ENCODE measurements at regions of chr22 and their contacts with region 1.

Region 1: DNA sequence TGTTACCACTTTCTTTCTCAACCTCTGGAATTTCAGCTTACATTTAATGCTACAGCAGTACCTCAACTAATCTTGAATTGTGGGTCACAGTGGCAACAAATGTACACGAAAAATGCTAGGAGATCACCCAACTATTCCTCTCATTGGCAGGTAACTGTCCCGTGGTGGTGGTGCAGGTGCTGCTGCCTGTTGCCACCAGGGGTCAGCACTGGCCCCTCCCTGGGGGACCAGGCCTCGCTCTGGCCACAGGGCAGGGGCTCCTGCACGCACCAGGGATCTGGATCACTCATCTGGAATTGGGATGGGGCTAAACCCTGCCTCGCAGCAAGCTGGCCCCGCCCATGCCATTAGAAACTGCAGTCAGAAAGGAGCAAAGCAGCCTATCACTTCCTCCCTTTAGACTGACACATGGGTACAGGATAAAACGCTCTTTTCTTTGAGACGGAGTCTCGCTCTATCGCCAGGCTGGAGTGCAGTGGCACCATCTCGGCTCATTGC is 6.9 kb upstream of the POLDIP3 start:
- DNase-seq: peak; percentile 66
- ATAC-seq: peak; percentile 89
- H3K4me3 Mint-ChIP-seq: no peak overlapping the region
- H3K27ac Mint-ChIP-seq: no peak overlapping the region
- H3K4me1 Mint-ChIP-seq: peaks cover 5% of the 10 kb centered on the region
- H3K27me3 Mint-ChIP-seq: no peaks in the 10 kb centered on the region
- CTCF ChIP-seq: peak; percentile 81

Region 2: GRCh38 chr22:42608823-42609361 is 12.7 kb before region 1 on chr22:
- CTCF ChIA-PET with region 1: interaction called, 13 read pairs
- POLR2A ChIA-PET with region 1: interaction called, 64 read pairs
- intact Hi-C with region 1: no loop called
- DNase-seq: no peak
- ATAC-seq: peak; percentile 31
- H3K4me3 Mint-ChIP-seq: no peak overlapping the region
- H3K27ac Mint-ChIP-seq: peak overlapping the region; percentile 69
- H3K4me1 Mint-ChIP-seq: peaks cover 53% of the 10 kb centered on the region
- H3K27me3 Mint-ChIP-seq: no peaks in the 10 kb centered on the region
- CTCF ChIP-seq: no peak

Region 3: DNA sequence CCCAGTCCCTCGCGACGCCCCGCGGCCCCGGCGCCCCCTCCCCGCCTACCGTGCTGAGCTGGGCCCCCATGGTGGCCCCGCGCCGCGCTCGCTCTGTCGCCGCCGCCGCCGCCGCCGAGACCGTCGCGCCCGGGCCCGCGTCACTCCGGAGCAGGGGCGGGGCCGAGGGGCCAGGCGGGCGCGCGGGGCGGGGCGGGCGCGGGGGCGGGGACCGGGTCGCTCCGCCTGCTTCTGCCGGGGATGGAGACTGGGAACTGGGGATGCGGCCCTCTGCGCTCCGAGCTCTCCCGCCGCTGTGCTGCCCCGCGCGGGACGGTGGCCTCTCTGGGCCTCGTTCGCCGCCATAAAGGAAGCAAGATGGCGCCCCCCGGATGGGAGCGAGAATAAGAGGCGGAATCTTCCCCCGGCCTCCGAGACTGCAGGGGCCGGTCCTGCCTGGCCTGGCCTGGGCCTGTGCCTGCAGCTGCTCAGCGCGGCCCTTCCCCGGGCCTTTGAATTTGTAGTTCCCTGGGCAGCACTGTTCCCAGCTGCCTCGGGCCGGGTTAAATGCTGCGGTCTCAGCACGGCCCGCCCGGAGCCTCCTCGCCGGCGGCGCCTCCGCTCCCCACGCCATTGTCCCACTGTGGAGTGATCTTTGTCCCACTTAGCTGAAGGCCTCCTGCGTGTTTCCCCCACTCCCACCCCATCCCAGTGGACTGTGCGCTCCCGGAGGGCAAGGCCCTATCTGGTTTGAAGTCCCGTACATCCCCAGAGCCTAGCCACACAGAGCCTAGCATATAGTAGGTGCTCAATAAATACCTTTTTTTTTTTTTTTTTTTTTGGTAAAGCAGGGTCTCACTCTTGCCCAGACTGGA is 27.9 kb after region 1 on chr22 and contains the start of gene CYB5R3:
- CTCF ChIA-PET with region 1: interaction called, 12 read pairs
- POLR2A ChIA-PET with region 1: interaction called, 64 read pairs
- intact Hi-C with region 1: no loop called
- DNase-seq: peak; percentile 85
- ATAC-seq: peak; percentile 88
- H3K4me3 Mint-ChIP-seq: peak within 1 kb of the TSS; percentile 95
- H3K27ac Mint-ChIP-seq: peak within 1 kb of the TSS; percentile 95
- H3K4me1 Mint-ChIP-seq: peaks cover 28% of the 10 kb centered on the region
- H3K27me3 Mint-ChIP-seq: no peaks in the 10 kb centered on the region
- CTCF ChIP-seq: no peak
- total RNA-seq, gene CYB5R3: 64.2 to 64.3 TPM

Measured in activated CD8-positive, alpha-beta T cell treated with anti-CD3 and anti-CD28 coated beads for 36 hours (primary cell).